Caco-2 (cell line): ENCODE measurements at regions of chr10 and their contacts with region 1.

Region 1: GRCh38 chr10:22391600-22391999 is 46.3 kb downstream of the SPAG6 start:
- DNase-seq: no peak
- H3K4me3 ChIP-seq: no peak overlapping the region
- H3K4me3 Mint-ChIP-seq: no peak overlapping the region
- H3K27ac Mint-ChIP-seq: peak overlapping the region; percentile 48
- H3K4me1 ChIP-seq: peaks cover 4% of the 10 kb centered on the region
- H3K4me1 Mint-ChIP-seq: peaks cover 24% of the 10 kb centered on the region
- H3K27me3 ChIP-seq: no peaks in the 10 kb centered on the region; the same call in 1 of the 2 replicates
- H3K27me3 Mint-ChIP-seq: no peaks in the 10 kb centered on the region
- CTCF ChIP-seq: no peak

Region 2: DNA sequence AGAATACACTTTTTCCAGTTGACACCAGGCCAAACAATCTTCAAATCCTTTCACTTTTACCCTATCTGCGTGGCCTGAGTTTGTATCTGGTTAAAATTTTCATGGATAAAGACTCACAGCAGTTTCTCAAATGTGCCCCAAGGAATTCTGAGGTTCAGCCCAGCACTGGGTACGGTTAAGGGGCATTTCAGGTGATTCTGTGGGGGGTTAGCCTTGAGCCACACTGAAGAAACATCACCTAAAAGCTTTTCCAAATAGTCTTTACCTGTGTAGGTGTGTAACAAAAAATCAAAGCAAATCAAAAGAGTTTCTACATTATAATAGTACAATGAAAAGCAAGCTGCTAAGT is 304.2 kb before region 1 on chr10:
- CTCF ChIA-PET with region 1: no interaction called
- POLR2A ChIA-PET with region 1: no interaction called
- intact Hi-C with region 1: no loop called
- DNase-seq: no peak
- H3K4me3 ChIP-seq: no peak overlapping the region
- H3K4me3 Mint-ChIP-seq: no peak overlapping the region
- H3K27ac Mint-ChIP-seq: peak overlapping the region; percentile 36
- H3K4me1 ChIP-seq: no peaks in the 10 kb centered on the region
- H3K4me1 Mint-ChIP-seq: peaks cover 5% of the 10 kb centered on the region
- H3K27me3 ChIP-seq: no peaks in the 10 kb centered on the region
- H3K27me3 Mint-ChIP-seq: peaks cover 19% of the 10 kb centered on the region
- CTCF ChIP-seq: no peak

Region 3: DNA sequence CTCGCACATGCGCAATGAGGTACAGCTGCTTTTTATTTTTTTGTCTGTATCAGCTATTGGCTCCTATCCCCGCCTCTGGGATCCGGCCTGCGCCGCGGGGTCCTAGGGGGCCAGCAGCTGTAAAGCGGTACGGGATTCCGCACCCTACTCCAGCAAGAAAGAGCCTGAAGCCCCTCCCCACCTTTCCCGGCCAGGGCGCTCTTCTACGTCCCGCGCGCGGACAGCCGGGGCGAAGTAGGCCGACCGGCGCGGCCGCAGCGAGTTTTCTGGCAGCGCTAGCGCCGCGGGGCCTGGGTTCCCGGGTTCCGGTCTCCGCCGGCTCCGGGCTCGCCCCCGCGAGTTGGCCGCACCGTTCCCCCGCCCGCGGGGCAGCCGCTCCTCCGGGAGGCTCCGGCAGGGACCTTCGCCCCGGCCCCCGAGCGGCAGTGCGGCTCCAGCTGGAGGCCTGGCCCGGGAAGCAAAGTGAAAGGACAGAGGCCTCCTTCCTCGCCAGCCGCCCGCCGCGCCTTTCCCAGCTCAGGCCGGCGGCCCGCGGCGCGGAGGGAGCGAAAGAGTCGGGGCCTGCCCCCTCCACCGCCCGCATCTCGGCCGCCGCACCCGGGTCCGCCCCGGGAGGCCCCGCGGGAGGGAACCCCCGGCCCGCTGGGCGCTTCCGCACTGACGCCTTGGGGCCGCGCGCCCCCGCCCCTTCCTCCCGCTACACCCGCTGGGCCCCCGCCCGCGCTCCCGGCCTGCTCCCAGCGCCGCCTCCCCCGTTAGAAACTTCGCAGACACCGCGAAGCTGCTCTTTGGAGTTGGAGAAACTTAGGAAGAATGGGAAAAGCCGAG is 51.0 kb before region 1 on chr10:
- CTCF ChIA-PET with region 1: interaction called, 3 read pairs
- POLR2A ChIA-PET with region 1: interaction called, 9 read pairs
- intact Hi-C with region 1: loop called (anchors 1 kb)
- DNase-seq: peak; percentile 70 to 82
- H3K4me3 ChIP-seq: peak overlapping the region; percentile 74
- H3K4me3 Mint-ChIP-seq: peak overlapping the region; percentile 91
- H3K27ac Mint-ChIP-seq: peak overlapping the region; percentile 93
- H3K4me1 ChIP-seq: peaks cover 5% of the 10 kb centered on the region; the same call in 1 of the 2 replicates
- H3K4me1 Mint-ChIP-seq: peaks cover 7% of the 10 kb centered on the region
- H3K27me3 ChIP-seq: no peaks in the 10 kb centered on the region; the same call in 1 of the 2 replicates
- H3K27me3 Mint-ChIP-seq: peaks cover 5% of the 10 kb centered on the region
- CTCF ChIP-seq: no peak

Region 4: GRCh38 chr10:22365644-22366565 is 25.7 kb before region 1 on chr10:
- CTCF ChIA-PET with region 1: no interaction called
- POLR2A ChIA-PET with region 1: interaction called, 4 read pairs
- intact Hi-C with region 1: loop called (anchors 2 kb)
- DNase-seq: no peak
- H3K4me3 ChIP-seq: no peak overlapping the region
- H3K4me3 Mint-ChIP-seq: no peak overlapping the region
- H3K27ac Mint-ChIP-seq: peak overlapping the region; percentile 46
- H3K4me1 ChIP-seq: no peaks in the 10 kb centered on the region
- H3K4me1 Mint-ChIP-seq: peaks cover 7% of the 10 kb centered on the region
- H3K27me3 ChIP-seq: no peaks in the 10 kb centered on the region
- H3K27me3 Mint-ChIP-seq: no peaks in the 10 kb centered on the region
- CTCF ChIP-seq: no peak